ENCODE measurements at regions of chr7 and their contacts with region 1.

Region 1: GRCh38 chr7:112550468-112551060 is 69.8 kb downstream of the LSMEM1 start:
- DNase-seq: no peak
- H3K4me3 Mint-ChIP-seq: no peak overlapping the region
- H3K27ac Mint-ChIP-seq: no peak overlapping the region
- H3K4me1 Mint-ChIP-seq: no peaks in the 10 kb centered on the region
- H3K27me3 Mint-ChIP-seq: peaks cover 4% of the 10 kb centered on the region

Region 2: GRCh38 chr7:112538726-112539255 is 11.8 kb before region 1 on chr7:
- intact Hi-C with region 1: no loop called
- DNase-seq: no peak
- H3K4me3 Mint-ChIP-seq: no peak overlapping the region
- H3K27ac Mint-ChIP-seq: no peak overlapping the region
- H3K4me1 Mint-ChIP-seq: peaks cover 2% of the 10 kb centered on the region
- H3K27me3 Mint-ChIP-seq: peaks cover 20% of the 10 kb centered on the region

Region 3: DNA sequence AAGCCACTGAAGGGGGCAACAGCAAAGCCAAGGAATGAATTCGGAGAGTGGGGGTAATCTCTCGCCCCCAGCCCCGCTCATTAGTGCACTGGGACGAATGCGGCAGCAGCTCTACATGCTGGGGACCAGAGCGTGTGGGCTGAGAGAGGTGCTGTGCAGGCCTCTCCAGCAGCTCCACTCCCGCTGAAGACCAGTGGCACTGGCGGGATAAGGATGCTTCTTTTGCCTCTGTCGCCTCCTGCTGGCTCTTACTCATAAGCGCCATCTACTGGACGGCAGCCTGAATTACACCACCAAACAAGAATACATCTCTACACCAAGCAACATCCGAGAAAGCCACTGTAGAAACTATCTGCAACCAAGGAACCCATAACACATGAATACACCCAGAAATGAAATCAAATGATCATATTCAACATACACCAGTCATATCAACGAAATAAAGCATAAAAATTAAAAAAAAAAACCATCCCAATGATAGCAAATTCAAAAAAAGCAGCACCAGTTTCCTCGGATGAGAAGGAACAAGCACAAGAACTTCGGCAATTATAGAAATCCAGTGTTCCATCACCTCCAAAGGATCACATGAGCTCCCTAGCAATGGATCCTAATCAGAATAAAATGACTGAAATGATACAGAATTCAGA is 318.7 kb after region 1 on chr7:
- intact Hi-C with region 1: loop called (anchors 1 kb)
- DNase-seq: peak; percentile 41
- H3K4me3 Mint-ChIP-seq: no peak overlapping the region
- H3K27ac Mint-ChIP-seq: no peak overlapping the region
- H3K4me1 Mint-ChIP-seq: peaks cover 8% of the 10 kb centered on the region
- H3K27me3 Mint-ChIP-seq: no peaks in the 10 kb centered on the region

Region 4: DNA sequence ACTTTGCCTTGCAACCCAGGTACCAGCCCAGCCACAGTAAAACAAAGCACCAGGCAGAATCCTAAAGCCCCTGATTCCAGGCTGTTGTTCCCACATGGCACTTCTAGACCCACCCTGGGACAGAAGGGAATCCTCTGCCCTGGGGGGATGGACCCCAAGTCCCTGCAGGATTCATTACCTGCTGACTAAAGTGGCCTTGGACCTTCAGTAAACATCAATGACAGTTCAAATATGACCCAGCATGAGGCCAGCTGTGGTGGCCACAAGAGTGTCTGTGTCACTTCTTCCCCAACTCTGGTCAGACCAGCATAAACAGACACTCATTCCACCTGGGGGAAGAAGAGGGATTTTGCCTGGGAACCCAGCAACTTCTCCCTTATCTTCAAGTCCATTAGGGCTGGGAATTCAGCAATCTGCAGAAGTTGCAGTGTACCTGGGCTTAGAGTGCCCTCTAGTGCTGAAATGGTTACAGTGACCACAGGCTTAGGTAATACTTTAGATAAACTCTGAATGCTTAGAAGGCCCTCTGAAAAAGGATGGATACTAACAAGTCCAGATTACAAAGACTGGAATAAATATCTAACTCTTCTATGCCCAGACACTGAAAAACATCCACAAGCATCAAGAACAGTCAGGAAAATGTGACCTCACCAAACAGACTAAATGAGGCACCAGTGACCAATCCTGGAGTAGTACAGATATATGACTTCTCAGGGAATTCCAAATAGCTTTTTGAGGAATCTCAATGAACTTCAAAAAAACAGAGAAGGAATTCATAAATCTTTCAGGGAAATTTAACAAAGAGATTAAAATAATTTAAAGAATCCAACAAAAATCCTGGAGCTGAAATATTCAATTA is 348.1 kb after region 1 on chr7:
- intact Hi-C with region 1: loop called (anchors 2 kb)
- DNase-seq: no peak
- H3K4me3 Mint-ChIP-seq: no peak overlapping the region
- H3K27ac Mint-ChIP-seq: no peak overlapping the region
- H3K4me1 Mint-ChIP-seq: no peaks in the 10 kb centered on the region
- H3K27me3 Mint-ChIP-seq: no peaks in the 10 kb centered on the region